GM10248 (cell line): ENCODE measurements at regions of chr14 and their contacts with region 1.

Region 1: DNA sequence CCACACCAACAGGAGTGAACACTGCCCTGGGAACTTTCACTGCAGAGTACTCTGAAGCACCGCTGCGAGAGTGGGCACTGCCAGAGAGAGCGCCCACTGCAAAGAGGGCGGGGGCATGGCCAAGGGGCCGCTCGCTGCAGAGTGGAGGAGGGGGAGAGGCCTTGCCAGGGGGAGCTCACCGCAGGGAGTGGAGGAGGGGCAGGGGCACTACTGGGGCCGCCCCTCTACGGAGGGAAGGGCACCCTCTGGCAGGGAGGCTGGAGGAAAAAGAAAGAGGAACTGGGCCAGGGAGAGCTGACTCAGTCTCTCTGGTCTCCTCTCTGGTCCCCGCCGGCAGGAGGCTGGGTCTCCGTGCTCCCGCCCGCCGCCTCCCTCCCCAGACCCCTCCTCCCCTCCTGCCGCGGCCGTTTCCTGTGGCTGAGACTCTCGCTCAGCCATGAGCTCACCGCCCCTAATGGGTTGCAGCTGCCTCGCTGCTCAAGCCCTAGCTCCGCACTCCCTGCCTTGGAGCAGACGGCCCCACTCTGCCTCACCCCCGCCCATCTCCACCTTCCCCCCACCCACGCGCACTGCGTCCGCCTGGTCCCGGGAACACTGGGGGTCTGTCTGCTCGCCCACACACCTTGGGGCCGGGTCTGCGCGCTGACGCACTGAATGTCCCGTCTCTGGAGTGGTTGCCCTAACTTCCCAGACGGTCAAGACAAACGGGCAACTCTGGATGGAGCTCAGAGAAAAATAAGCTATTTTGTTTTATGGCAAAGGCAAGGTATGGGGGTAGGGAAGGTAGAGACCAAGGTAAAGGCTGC is 1.3 kb downstream of the ARHGEF40 start:
- DNase-seq: peak; percentile 88
- CTCF ChIP-seq: no peak

Region 2: GRCh38 chr14:21049271-21049673 is 22.2 kb before region 1 on chr14:
- CTCF ChIA-PET with region 1: interaction called, 12 read pairs
- POLR2A ChIA-PET with region 1: no interaction called
- DNase-seq: no peak
- CTCF ChIP-seq: no peak

Region 3: GRCh38 chr14:21084988-21085853 is 13.8 kb after region 1 on chr14:
- CTCF ChIA-PET with region 1: interaction called, 44 read pairs
- POLR2A ChIA-PET with region 1: no interaction called
- DNase-seq: no peak
- CTCF ChIP-seq: no peak

Region 4: DNA sequence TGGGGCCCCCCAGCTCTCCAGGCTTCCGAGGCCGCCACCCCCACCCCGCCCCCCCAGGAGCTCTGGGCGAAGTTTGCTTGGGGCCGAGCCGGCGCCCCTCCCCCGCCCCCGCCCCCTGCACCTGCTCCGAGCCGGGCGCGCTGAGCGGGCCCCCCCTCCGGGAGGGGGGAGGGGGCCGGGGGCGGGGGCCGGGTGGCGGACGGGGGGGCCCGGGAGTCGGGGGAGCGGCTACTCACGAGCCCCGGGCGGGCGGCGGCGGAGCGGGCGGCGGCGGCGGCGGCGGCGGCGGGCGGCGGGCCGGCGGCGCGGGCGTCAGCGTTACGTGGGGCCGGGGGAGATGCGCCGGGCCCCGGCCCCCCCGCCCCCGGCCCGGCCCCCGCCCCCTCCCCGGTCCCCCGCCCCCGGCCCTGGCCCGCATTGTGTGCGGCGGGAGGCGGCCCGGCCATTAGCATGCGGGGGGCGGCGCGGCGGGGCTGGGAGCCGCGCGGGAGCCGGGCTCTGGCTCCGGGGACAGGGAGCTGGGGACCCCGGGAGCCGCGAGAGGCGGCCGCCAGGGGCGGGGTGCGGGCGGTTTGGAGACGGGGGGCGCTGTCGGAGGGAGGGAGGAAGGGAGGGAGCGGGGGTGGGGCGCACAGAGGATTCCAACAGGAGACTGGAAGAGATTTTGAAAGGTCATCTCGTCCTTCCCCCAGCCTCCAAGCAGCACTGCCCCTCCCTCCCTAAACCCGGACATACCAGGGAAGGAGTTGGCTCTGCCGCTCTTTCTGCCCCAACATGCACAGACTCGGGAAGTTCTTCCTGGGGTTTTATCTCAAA is 26.9 kb after region 1 on chr14 and contains the start of gene ZNF219:
- CTCF ChIA-PET with region 1: interaction called, 130 read pairs
- POLR2A ChIA-PET with region 1: interaction called, 4 read pairs
- DNase-seq: no peak
- CTCF ChIP-seq: no peak

Region 5: DNA sequence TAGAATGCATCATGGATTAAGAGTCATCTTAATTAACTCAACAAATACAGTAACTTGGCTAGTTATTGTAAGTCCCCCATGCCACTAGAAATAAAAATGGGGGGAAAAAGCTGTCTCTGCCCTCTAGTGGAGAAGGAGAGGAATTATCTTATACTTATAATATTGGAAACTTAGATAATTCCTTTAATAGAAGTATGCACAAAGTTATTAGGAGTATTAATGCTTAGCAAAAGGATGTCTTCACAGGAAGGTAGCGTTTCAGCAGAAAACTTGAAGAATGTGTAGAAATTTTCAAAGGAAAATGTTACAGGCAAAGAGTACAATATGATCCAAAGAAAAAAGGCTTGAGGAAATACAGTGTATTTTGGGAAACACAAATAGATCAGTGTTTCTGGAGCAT is 64.6 kb after region 1 on chr14:
- CTCF ChIA-PET with region 1: interaction called, 10 read pairs
- POLR2A ChIA-PET with region 1: no interaction called
- DNase-seq: peak; percentile 57
- CTCF ChIP-seq: peak; percentile 30